Activated T-helper 1 cell treated with anti-CD3 and anti-CD28 coated beads, Interleukin-12 subunit alpha, Interleukin-12 subunit beta, Interleukin-2, Interleukin-4 antibody, amounts not matched to agents 30 ng/mL and 10 ng/mL and 1 ng/mL, durations not matched to agents 14 hours and 24 hours and 36 hours (primary cell): ENCODE measurements at regions of chr14 and their contacts with region 1.

Region 1: DNA sequence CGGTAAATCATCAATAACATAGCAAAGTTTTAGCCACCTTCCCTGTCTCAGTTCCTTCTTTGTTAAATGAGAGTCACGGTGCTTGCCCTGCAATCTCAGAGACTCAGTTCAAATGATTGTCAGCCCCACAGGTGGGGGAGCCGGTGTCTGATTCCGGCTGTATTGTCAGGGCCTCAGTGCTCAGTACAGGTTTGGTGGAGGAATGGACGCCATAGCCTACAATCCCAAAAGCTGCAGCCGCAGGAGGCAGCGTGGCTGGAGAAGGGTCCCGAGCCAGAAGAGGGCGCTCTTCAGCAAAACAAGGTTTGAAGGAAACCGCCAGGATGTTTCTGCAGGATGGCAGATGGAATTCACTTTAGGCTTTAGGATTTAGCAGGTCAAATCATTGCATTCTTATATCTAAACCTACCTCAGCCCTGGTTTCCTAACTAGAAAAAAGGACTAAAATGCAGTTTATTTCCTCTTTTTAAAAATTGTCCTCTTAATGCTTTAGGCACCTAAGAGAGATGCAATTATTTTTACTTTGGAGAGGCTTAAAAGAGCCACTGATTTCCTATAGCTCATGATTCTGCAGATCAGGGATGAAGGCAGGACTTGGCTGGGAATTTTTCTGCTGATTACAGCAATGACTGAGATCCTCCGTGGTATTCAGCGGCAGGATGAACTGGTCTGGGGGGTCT is 29.2 kb downstream of the FOS start:
- DNase-seq: peak; percentile 54
- H3K4me3 Mint-ChIP-seq: no peak overlapping the region
- H3K27ac Mint-ChIP-seq: no peak overlapping the region
- H3K4me1 Mint-ChIP-seq: peaks cover 18% of the 10 kb centered on the region
- H3K27me3 Mint-ChIP-seq: peaks cover 4% of the 10 kb centered on the region

Region 2: DNA sequence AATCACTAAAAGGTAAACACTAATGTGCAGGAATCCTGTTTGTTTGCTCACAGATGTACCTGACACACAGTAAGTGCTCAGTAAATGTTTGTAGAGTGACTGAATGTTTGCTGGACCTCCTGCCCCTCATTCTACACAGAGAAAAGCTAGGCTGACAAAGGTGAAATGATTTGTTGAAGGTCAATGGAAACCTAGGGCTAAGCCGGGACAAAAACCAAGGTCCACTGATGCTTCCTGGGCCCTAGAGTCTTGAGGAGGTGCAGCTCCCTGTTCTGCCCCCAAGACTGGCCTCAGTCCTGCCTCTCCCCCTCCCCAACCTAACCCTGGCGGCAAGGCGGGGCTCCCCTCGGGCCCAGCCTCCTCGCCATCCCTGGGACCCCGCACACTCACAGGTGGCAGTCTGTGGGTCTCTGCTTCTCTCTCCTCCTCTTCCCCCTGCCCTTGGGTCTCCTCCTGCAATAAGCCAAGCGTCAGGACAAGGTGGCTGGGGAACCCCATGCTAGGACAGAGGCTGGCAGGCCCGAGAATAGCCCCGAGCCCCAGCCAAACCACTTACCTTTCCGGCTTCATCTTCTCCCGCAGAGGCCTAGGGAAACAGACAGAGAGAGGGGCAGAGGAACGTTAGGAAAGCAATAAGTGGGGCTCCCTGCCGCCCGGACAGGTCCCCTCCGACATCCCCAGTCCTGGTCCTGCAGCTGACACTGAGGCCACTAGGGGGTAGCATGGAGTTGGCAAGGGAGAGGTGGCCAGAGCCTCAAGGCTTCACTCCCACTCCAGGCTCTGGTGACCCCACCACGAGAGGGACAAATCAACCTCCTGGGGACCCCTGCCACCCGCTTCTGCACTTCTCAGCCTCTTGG is 361.8 kb before region 1 on chr14:
- intact Hi-C with region 1: loop called (anchors 1 kb)
- DNase-seq: peak; percentile 60
- H3K4me3 Mint-ChIP-seq: no peak overlapping the region
- H3K27ac Mint-ChIP-seq: no peak overlapping the region
- H3K4me1 Mint-ChIP-seq: peaks cover 32% of the 10 kb centered on the region
- H3K27me3 Mint-ChIP-seq: peaks cover 2% of the 10 kb centered on the region

Region 3: GRCh38 chr14:75132382-75133086 is 175.3 kb before region 1 on chr14:
- intact Hi-C with region 1: loop called (anchors 1 kb)
- DNase-seq: peak; percentile 47
- H3K4me3 Mint-ChIP-seq: no peak overlapping the region
- H3K27ac Mint-ChIP-seq: peak overlapping the region; percentile 4
- H3K4me1 Mint-ChIP-seq: peaks cover 20% of the 10 kb centered on the region
- H3K27me3 Mint-ChIP-seq: no peaks in the 10 kb centered on the region

Region 4: DNA sequence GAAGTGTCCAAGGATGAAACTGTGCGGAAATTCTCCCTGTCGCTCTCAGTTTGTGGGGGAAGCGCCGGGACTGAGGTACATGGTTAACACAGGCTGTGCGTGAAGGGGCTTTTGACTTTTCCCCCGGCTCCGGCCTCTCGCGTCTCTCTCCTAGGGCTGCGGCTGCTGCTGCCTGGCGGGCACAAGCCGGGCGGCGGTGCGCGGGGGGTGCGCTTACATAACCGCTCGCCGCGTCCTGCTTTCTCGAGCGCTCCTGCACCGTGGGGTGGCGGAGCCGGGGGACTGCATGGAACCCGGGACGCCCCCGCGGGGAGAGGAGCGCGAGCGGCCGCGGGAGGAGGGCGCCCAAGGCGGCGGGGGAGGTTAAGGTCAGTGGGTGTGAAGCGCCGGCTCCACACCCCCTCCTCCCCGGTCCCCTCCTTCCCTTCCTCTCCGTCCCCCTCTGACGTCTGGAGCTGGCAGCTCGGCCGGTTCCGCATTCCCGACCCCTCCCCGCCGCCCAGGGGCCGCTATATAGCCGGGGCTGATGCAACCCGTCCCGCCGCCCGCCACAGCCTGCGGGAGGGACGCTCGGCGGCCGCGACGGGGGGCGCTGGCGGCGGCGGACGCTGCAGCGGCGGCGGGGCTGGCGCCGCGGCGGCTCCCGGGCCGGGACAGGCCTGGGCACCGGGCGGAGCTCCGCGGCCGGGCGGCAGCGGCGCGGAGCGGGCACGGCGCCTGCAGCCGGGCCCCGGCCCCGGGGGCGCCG is 119.8 kb after region 1 on chr14 and contains the start of gene JDP2:
- intact Hi-C with region 1: loop called (anchors 5 kb)
- DNase-seq: peak; percentile 33
- H3K4me3 Mint-ChIP-seq: peak within 1 kb of the TSS; percentile 81
- H3K27ac Mint-ChIP-seq: peak within 1 kb of the TSS; percentile 71
- H3K4me1 Mint-ChIP-seq: peaks cover 15% of the 10 kb centered on the region
- H3K27me3 Mint-ChIP-seq: peaks cover 17% of the 10 kb centered on the region
- total RNA-seq, gene JDP2: 1.8 and 2.0 TPM in 2 replicates

Region 5: DNA sequence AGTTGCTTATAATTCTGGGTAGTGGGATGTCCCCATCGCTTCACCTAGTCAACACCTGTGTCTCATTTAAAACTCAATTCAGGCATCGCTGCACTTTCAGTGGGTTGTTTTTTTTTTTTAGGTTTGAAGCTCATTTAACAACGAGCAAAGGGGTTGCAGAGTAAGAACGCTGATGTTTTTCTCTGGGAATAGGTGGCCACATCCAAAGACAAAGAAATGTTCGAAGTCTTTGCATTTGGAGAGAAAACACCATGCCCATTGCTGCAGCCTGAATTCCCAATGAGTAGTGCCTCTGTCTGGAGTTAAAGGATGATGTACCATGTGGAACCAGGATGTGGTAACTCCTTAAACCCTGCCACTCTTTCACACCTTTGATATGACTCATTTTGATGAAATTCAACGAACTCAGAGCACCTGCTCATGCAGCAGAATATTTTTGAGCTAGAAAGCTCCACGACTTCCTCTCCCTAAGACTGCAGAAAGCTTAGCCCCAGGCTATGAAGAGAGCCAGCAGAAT is 179.4 kb after region 1 on chr14:
- intact Hi-C with region 1: loop called (anchors 1 kb)
- DNase-seq: peak; percentile 43
- H3K4me3 Mint-ChIP-seq: no peak overlapping the region
- H3K27ac Mint-ChIP-seq: peak overlapping the region; percentile 72
- H3K4me1 Mint-ChIP-seq: peaks cover 47% of the 10 kb centered on the region
- H3K27me3 Mint-ChIP-seq: no peaks in the 10 kb centered on the region

Region 6: GRCh38 chr14:75654127-75654732 is 346.4 kb after region 1 on chr14:
- intact Hi-C with region 1: loop called (anchors 1 kb)
- DNase-seq: peak; percentile 74
- H3K4me3 Mint-ChIP-seq: no peak overlapping the region
- H3K27ac Mint-ChIP-seq: no peak overlapping the region
- H3K4me1 Mint-ChIP-seq: peaks cover 20% of the 10 kb centered on the region
- H3K27me3 Mint-ChIP-seq: no peaks in the 10 kb centered on the region